Dendritic cell treated with granulocyte-macrophage colony-stimulating factor and Interleukin-4, amounts not matched to agents 40 ng/mL and 50 ng/mL, for 4 days (primary cell): ENCODE measurements at regions of chr2 and their contacts with region 1.

Region 1: GRCh38 chr2:206392118-206392517 is 51.2 kb upstream of the ADAM23 start:
- H3K4me3 Mint-ChIP-seq: no peak overlapping the region
- H3K27ac Mint-ChIP-seq: no peak overlapping the region
- H3K4me1 Mint-ChIP-seq: no peaks in the 10 kb centered on the region
- H3K27me3 Mint-ChIP-seq: no peaks in the 10 kb centered on the region

Region 2: GRCh38 chr2:205585449-205586383 is 806.4 kb before region 1 on chr2:
- intact Hi-C with region 1: no loop called
- H3K4me3 Mint-ChIP-seq: no peak overlapping the region
- H3K27ac Mint-ChIP-seq: no peak overlapping the region
- H3K4me1 Mint-ChIP-seq: no peaks in the 10 kb centered on the region
- H3K27me3 Mint-ChIP-seq: no peaks in the 10 kb centered on the region

Region 3: GRCh38 chr2:206558492-206558891 is 166.4 kb after region 1 on chr2:
- intact Hi-C with region 1: loop called (anchors 2 kb)
- H3K4me3 Mint-ChIP-seq: no peak overlapping the region
- H3K27ac Mint-ChIP-seq: no peak overlapping the region
- H3K4me1 Mint-ChIP-seq: no peaks in the 10 kb centered on the region
- H3K27me3 Mint-ChIP-seq: peaks cover 5% of the 10 kb centered on the region

Region 4: GRCh38 chr2:206774871-206775270 is 382.8 kb after region 1 on chr2:
- intact Hi-C with region 1: loop called (anchors 10 kb)
- H3K4me3 Mint-ChIP-seq: no peak overlapping the region
- H3K27ac Mint-ChIP-seq: no peak overlapping the region
- H3K4me1 Mint-ChIP-seq: no peaks in the 10 kb centered on the region
- H3K27me3 Mint-ChIP-seq: no peaks in the 10 kb centered on the region